ENCODE measurements at regions of chr14 and their contacts with region 1.

Region 1: GRCh38 chr14:22570132-22570949 is 18.7 kb downstream of the DAD1 start:
- DNase-seq: peak; percentile 81
- CTCF ChIP-seq: peak; percentile 93

Region 2: DNA sequence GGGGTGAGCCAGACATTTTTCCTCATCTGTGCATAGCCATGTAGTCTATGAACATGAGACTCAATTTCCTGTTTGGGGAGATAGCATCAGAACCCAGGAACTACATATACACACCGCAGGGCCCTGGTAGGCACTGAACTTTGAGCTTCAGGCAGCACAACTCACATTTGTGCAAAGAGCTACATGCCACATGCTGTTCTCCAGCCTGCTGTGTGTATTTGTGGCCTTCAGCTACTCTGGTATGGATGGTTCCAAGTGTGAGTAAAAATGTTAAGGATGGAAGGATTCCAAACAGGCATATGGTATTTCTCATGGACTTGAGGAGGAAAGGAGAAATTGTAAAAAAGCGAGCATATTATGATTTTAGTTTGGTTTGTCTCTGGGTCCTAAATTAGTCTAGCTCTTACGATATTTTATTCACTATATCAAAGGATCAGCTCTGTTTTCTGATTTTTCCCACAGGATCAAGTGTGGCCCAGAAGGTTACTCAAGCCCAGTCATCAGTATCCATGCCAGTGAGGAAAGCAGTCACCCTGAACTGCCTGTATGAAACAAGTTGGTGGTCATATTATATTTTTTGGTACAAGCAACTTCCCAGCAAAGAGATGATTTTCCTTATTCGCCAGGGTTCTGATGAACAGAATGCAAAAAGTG is 474.4 kb before region 1 on chr14:
- CTCF ChIA-PET with region 1: no interaction called
- POLR2A ChIA-PET with region 1: no interaction called
- DNase-seq: no peak
- CTCF ChIP-seq: no peak

Region 3: GRCh38 chr14:22314181-22314820 is 256.0 kb before region 1 on chr14:
- CTCF ChIA-PET with region 1: interaction called, 20 read pairs
- POLR2A ChIA-PET with region 1: no interaction called
- DNase-seq: peak; percentile 68
- CTCF ChIP-seq: peak; percentile 71

Region 4: GRCh38 chr14:22466491-22466890 is 103.8 kb before region 1 on chr14:
- CTCF ChIA-PET with region 1: interaction called, 18 read pairs
- POLR2A ChIA-PET with region 1: no interaction called
- DNase-seq: peak; percentile 45
- CTCF ChIP-seq: no peak

Region 5: GRCh38 chr14:22505697-22506377 is 64.5 kb before region 1 on chr14:
- CTCF ChIA-PET with region 1: interaction called, 43 read pairs
- POLR2A ChIA-PET with region 1: no interaction called
- DNase-seq: peak; percentile 48
- CTCF ChIP-seq: no peak

Region 6: GRCh38 chr14:22589096-22589839 is 18.9 kb after region 1 on chr14 and contains the start of gene DAD1:
- CTCF ChIA-PET with region 1: interaction called, 191 read pairs
- POLR2A ChIA-PET with region 1: interaction called, 4 read pairs
- DNase-seq: peak; percentile 98
- CTCF ChIP-seq: no peak

Region 7: DNA sequence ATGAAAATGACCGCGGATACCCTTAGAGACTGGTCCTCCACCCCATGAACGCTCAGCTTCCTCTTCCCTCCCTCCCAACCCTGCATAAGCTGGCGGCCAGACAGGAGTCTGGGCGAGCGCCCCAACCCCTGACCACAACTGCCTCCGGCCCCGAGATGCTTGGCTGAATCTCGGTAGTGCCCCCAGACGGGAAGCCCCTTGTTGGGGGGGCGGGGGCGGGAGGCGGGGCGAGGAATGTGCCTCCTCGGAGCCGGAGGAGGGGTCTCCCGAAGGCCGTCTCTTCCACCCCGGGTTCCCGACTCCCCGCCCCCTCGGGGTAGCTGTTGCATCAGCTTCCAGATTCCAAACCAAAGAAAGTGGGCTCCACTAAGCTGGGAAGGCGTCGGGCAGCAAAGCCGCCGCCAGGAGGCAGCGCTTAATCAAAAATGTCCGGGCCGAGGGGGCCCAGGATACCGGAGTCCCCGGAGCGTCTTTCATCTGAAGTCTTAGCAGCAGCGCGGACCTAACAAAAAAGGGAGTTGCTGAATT is 252.3 kb after region 1 on chr14:
- CTCF ChIA-PET with region 1: interaction called, 24 read pairs
- POLR2A ChIA-PET with region 1: no interaction called
- DNase-seq: peak; percentile 74
- CTCF ChIP-seq: peak; percentile 89

Region 8: DNA sequence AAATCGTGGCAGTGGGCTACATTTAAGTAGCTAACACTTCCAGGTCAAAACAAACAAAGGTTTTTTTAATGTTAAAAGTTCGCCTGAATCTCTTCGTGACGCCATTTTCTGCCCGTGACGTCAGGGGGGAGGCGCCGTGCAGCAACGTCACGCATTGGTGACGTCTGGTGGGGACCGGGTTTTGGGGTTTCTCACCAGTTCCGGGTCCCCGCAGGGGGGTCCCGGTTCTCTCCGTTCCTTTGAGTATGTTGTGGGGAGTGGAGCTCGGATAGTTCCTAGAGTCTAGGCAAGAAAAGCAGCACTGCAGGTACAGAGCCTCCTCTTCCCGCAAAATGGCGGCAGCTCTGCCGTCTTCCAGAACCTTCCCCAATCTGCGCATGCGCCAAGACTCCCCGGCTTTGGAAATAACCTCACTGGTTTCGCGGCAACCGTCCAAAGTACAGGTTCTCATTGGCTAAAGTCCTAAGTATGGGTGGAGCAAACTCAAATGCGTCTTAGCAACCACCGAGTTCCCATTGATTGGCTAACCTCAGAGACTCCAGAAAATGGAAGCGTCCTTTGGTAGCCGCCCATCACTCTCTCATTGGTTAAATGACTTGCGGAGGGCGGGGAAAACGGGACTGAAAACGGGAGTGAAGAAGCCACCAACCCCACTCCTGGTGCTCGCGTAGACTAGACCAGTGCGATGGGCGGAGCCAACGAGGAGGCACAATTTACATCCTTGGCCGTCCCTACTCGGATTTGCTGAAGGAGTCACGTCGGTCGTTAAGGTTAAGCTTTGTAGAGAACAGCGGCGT is 348.7 kb after region 1 on chr14 and contains the start of gene RBM23:
- CTCF ChIA-PET with region 1: interaction called, 16 read pairs
- POLR2A ChIA-PET with region 1: no interaction called
- DNase-seq: peak; percentile 94
- CTCF ChIP-seq: no peak